Activated T-helper 2 cell treated with anti-CD3 and anti-CD28 coated beads, Interferon-gamma antibody, Interleukin-2, Interleukin-4, amounts not matched to agents 10 μg/mL and 5 μg/mL and 100 μg/mL, durations not matched to agents 14 hours and 24 hours and 36 hours (primary cell): ENCODE measurements at regions of chr7 and their contacts with region 1.

Region 1: GRCh38 chr7:92809397-92810241 is 26.8 kb downstream of the CDK6 start:
- DNase-seq: peak; percentile 71
- H3K4me3 Mint-ChIP-seq: peak overlapping the region; percentile 61
- H3K27ac Mint-ChIP-seq: peak overlapping the region; percentile 91
- H3K4me1 Mint-ChIP-seq: peaks cover 71% of the 10 kb centered on the region
- H3K27me3 Mint-ChIP-seq: no peaks in the 10 kb centered on the region

Region 2: DNA sequence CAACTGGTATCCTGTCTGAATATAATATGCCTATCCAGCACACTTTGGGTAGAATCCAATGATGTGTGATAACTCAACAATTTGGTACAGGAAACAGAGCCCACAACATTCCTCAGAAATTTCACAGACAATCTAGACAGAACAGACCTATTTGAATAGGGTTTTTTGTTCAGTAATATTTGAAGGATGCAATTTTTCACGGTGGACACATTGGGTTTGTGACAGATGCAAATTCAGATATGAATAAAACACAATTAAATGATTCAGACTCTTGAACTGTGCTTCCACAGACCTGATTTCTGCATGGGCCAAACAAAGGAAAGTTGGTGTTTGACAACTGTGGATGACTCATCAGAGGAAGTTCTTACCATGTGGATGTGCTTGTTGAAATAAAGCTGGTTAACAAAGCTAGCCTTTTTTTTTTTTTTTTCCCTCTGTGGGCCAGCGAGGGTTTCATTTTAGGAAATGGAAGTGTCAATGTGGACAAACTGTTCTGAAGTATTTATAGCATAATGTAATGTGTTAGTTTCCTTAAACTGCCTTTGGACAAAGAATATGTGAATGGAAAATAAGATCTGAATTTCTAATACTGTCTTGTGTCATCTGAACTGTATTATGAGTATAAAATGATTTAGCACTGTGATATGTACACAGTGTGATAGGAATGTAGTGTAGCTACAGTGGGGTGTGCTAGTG is 176.3 kb before region 1 on chr7:
- intact Hi-C with region 1: loop called (anchors 1 kb)
- DNase-seq: no peak
- H3K4me3 Mint-ChIP-seq: peak overlapping the region; percentile 43
- H3K27ac Mint-ChIP-seq: peak overlapping the region; percentile 96
- H3K4me1 Mint-ChIP-seq: peaks cover 70% of the 10 kb centered on the region
- H3K27me3 Mint-ChIP-seq: no peaks in the 10 kb centered on the region

Region 3: DNA sequence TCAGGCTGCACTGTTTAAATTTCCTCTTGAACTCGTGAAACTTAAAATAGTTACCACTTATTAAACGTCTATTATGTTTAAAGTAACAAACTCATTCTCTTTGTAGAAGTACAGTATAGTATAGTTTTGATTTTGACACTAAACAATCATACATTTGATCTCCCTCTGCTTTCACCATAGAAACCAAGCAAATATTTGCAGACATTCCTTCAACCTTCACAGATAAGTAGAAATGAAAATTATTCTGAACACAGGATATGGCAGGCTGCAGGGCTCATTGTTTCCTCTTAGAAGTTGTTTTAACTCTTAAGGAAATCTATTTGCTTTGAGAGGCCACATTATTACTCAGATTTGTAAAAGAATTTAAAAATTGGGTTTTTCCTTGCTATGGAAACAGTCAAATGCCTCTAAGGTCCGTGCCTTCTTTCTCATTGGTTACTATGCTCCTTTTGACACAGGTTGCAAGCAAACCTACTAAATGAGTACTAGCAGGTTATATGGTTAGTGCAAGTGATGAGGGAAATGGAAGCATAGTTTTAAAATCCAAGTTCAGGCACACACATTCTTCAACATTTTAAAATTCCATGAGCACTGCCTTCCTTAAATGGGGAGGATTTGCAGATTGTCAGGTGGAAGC is 126.6 kb before region 1 on chr7:
- intact Hi-C with region 1: loop called (anchors 1 kb)
- DNase-seq: no peak
- H3K4me3 Mint-ChIP-seq: peak overlapping the region; percentile 60
- H3K27ac Mint-ChIP-seq: peak overlapping the region; percentile 93
- H3K4me1 Mint-ChIP-seq: peaks cover 84% of the 10 kb centered on the region
- H3K27me3 Mint-ChIP-seq: no peaks in the 10 kb centered on the region

Region 4: DNA sequence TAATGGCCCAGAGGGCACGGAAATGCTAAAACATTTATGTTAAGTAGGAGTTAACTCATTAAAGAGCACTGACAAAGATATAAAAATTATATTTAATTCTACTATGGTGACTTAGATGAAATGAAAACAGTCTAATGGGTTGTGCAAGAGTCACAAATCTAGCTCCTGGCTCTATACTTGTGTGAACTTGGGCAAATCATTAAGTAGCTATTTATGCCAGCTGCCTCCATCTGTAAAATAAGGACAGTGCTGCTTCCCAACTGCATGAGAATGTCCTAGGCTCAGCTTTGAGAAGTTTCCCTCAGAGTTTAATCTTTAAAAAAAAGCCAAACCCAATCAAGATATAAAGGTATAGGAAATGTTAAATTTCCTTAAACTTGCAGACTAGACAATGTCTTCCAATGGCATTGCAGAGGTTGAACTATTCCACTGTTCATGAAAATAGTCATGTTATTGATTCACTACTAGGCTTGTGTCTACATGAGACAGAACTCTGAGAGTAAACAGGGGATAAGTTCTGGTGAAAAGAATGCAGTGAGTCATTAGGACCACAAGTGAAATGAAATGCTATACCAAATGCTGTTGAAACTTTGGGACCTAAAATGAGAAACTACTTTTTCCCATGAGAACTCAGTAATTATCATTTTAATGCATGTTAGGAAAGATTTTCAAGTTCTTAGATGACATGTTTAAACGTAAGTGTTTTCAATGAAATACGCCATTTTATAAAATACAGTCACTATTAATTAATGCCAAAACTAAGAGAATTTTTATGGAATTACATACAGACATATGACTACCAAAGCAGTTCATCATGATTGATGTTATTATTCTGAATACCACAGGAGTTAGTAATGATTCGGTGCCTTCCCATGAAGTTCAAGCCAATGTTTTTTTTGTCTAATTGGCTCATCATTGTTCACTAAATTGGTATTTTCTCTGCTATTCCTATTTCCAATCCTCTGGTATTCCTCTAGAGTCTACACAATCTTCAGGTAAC is 57.4 kb before region 1 on chr7:
- intact Hi-C with region 1: loop called (anchors 2 kb)
- DNase-seq: no peak
- H3K4me3 Mint-ChIP-seq: no peak overlapping the region
- H3K27ac Mint-ChIP-seq: peak overlapping the region; percentile 76
- H3K4me1 Mint-ChIP-seq: peaks cover 62% of the 10 kb centered on the region
- H3K27me3 Mint-ChIP-seq: no peaks in the 10 kb centered on the region

Region 5: GRCh38 chr7:92797693-92798092 is 11.9 kb before region 1 on chr7:
- intact Hi-C with region 1: loop called (anchors 1 kb)
- DNase-seq: no peak
- H3K4me3 Mint-ChIP-seq: no peak overlapping the region
- H3K27ac Mint-ChIP-seq: no peak overlapping the region
- H3K4me1 Mint-ChIP-seq: peaks cover 36% of the 10 kb centered on the region
- H3K27me3 Mint-ChIP-seq: no peaks in the 10 kb centered on the region